Left ventricle myocardium superior (tissue), 1 donor: ENCODE measurements at regions of chr2 and their contacts with region 1.

Region 1: DNA sequence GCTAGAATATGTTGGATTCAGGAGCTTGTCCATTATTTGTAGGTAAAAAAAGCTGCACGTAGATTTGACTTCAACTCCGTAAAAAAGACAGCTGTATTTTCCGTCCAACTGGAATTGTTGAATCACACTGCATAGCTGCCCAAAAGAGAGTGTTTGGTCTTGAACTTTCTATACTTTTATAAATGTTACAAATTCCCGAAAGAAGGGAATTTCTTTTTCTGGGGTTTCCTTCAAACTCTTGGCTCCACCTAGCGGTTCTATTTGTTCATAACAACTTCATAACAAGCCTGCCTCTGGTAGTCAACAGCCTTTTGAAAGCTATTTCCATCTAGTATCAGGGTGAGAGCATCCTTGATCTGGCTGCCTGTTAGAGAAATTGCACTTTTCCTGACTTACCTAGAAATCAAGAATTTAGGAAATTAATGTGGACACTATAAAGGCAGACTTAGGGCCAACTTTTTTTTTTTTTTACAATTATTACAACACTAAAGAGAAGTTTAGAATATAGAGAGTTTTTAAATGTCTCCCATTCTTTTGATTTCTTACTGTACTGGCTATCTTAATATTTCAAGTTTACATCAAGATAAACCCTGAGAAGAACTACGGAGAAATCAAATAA is 48.1 kb downstream of the TMEM185B start:
- DNase-seq: no peak
- ATAC-seq: peak; percentile 52

Region 2: DNA sequence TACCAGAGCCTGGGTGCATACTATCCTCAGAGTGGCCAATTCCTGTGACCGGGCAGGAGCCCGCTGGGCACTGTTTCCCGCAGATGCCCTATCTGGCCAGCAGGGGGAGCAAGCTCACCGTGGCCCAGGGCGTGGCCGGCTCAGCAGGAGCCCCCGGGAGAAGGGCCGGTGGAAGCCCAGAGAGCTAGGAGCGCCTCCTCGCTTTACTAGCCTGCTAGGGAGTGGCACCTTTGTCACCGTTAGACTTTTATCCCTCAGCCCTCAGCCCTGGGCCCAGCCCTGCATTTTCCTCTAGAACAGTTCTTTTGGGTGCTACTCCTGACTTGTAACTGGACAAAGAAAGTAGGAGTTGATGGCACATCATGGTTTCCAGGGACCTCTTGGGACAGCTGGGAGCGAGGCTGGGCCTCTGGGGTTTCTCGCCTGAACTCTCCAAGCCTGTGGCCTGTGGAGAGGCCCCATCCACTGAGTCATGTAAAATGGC is 472.1 kb before region 1 on chr2:
- intact Hi-C with region 1: loop called (anchors 10 kb)
- DNase-seq: peak; percentile 77
- ATAC-seq: peak; percentile 92